ENCODE measurements at regions of chr17 and their contacts with region 1.

Region 1: GRCh38 chr17:29293890-29294579 is at the start of gene NUFIP2:
- DNase-seq: peak; percentile 98
- H3K4me3 ChIP-seq: peak within 1 kb of the TSS; percentile 76 to 100 (median 99)
- H3K4me3 Mint-ChIP-seq: peak within 1 kb of the TSS; percentile 100
- H3K27ac ChIP-seq: peak within 1 kb of the TSS; percentile 98 to 99
- H3K27ac Mint-ChIP-seq: peak within 1 kb of the TSS; percentile 99 to 100 (median 99)
- H3K4me1 ChIP-seq: peaks cover 32 to 43% of the 10 kb centered on the region in 2 donors
- H3K4me1 Mint-ChIP-seq: peaks cover 37% of the 10 kb centered on the region
- H3K27me3 ChIP-seq: no peaks in the 10 kb centered on the region
- H3K27me3 Mint-ChIP-seq: peaks cover 0 to 9% (median 0%) of the 10 kb centered on the region in 3 donors
- CTCF ChIP-seq: no peak
- polyA plus RNA-seq, gene NUFIP2: 8.7 to 25.1 (median 13.7) TPM

Region 2: GRCh38 chr17:29140051-29140621 is 153.9 kb before region 1 on chr17:
- intact Hi-C with region 1: loop called (anchors 5 kb)
- DNase-seq: peak; percentile 73 to 94 (median 87)
- H3K4me3 ChIP-seq: peak overlapping the region; percentile 72 to 96 (median 75)
- H3K4me3 Mint-ChIP-seq: peak overlapping the region; percentile 87 to 98
- H3K27ac ChIP-seq: peak overlapping the region; percentile 78 to 90
- H3K27ac Mint-ChIP-seq: peak overlapping the region; percentile 93 to 99 (median 96)
- H3K4me1 ChIP-seq: peaks cover 62 to 87% of the 10 kb centered on the region in 2 donors
- H3K4me1 Mint-ChIP-seq: peaks cover 68% of the 10 kb centered on the region
- H3K27me3 ChIP-seq: no peaks in the 10 kb centered on the region
- H3K27me3 Mint-ChIP-seq: no peaks in the 10 kb centered on the region
- CTCF ChIP-seq: no peak

Region 3: DNA sequence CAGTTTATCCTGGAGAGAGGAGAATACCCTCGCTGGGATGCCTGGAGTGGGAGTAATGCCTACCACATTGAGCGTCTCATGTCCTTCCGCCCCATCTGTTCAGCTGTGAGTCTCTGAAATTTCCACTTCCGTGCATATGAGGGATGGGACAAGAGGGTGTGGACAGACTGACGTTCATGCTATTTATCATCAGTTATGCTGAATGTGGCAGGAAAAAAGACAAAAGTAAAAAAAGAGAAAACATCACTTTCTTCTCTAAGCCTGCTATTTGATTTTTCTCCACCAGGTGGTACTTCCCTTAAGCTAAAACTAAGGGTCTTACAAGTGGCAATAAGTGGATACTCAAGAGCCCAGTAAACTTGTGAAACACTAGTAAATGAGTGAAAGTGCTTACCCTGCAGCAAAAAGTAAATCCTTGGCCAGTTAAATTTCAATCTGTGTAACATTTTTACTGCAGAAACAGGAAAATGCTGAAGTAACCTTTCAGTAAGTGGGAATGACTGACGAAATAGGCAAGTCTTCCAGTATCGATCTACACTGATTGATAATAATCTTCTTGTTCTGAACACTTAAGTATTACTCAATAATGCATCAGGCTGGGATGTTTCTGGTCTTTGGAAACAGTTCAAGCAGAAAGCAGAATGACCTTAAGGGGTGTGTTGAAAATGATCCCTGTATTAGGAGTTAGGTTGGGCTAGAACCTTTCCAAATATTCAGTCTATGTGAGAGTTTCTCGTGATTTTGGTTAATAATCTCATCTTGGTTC is 41.8 kb before region 1 on chr17:
- intact Hi-C with region 1: loop called (anchors 5 kb)
- DNase-seq: peak in 1 of 3 donors; percentile 38
- H3K4me3 ChIP-seq: no peak overlapping the region
- H3K4me3 Mint-ChIP-seq: no peak overlapping the region
- H3K27ac ChIP-seq: no peak overlapping the region
- H3K27ac Mint-ChIP-seq: peak overlapping the region in 2 of 7 donors; percentile 15 to 66
- H3K4me1 ChIP-seq: peaks cover 26 to 49% of the 10 kb centered on the region in 2 donors
- H3K4me1 Mint-ChIP-seq: peaks cover 46% of the 10 kb centered on the region
- H3K27me3 ChIP-seq: no peaks in the 10 kb centered on the region
- H3K27me3 Mint-ChIP-seq: no peaks in the 10 kb centered on the region
- CTCF ChIP-seq: peak; percentile 76

Region 4: GRCh38 chr17:29331708-29332085 is 37.7 kb after region 1 on chr17:
- intact Hi-C with region 1: no loop called
- DNase-seq: no peak
- H3K4me3 ChIP-seq: no peak overlapping the region
- H3K4me3 Mint-ChIP-seq: no peak overlapping the region
- H3K27ac ChIP-seq: no peak overlapping the region
- H3K27ac Mint-ChIP-seq: no peak overlapping the region
- H3K4me1 ChIP-seq: no peaks in the 10 kb centered on the region
- H3K4me1 Mint-ChIP-seq: no peaks in the 10 kb centered on the region
- H3K27me3 ChIP-seq: no peaks in the 10 kb centered on the region
- H3K27me3 Mint-ChIP-seq: peaks cover 4 to 5% (median 4%) of the 10 kb centered on the region in 3 donors
- CTCF ChIP-seq: no peak

Region 5: DNA sequence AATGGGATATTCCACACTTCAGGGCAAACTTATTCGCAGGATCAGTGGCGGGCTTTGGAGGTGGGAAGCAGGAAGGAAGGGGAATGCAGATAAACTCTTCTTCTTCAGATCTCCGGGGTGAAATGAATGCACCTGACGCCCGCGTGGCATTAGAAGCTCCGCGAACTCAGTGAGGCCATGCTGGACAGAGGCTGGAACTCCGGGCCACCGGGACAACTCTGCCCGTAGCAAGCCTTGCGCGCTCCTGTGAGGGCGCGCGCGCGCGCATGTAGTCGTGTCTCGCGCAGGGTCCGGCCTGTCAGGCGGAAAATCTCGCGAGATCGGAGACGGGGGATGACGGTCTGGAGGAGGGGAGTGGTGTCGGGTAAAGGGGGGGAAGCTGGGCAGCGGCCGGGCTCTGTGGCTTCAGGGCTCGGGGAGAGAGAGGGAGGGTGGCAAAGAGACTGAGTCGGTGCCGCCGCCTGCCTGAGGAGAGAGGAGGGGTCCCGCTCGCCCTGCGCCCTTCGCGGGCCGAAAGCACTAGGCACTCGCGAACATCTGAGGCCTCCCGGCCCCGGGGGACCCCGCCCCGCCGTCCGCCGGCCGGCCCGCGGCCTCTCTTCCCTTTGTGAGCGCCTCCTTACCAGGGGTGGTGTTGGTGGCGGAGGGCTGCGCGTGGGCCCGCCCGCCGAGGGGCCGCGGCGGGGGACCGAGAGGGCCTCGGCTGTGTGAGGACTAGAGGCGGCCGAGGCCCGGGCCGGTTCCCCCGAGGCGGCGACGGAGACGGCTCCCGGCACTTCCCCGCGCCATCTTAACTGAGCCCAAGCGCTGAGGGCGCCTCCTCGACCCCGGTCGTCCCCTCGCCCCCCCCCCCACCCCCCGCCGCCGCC is 96.2 kb after region 1 on chr17 and contains the start of gene TAOK1:
- intact Hi-C with region 1: loop called in 1 of 2 experiments (anchors 5 kb)
- DNase-seq: peak; percentile 95 to 98 (median 97)
- H3K4me3 ChIP-seq: peak within 1 kb of the TSS; percentile 74 to 100 (median 97)
- H3K4me3 Mint-ChIP-seq: peak within 1 kb of the TSS; percentile 94 to 98
- H3K27ac ChIP-seq: peak within 1 kb of the TSS; percentile 73 to 89
- H3K27ac Mint-ChIP-seq: peak within 1 kb of the TSS; percentile 88 to 97 (median 96)
- H3K4me1 ChIP-seq: peaks cover 15 to 38% of the 10 kb centered on the region in 2 donors
- H3K4me1 Mint-ChIP-seq: peaks cover 36% of the 10 kb centered on the region
- H3K27me3 ChIP-seq: no peaks in the 10 kb centered on the region
- H3K27me3 Mint-ChIP-seq: no peaks in the 10 kb centered on the region
- CTCF ChIP-seq: no peak
- polyA plus RNA-seq, gene TAOK1: 2.4 to 13.9 (median 4.8) TPM